B cell (primary cell): ENCODE measurements at regions of chr19 and their contacts with region 1.

Region 1: DNA sequence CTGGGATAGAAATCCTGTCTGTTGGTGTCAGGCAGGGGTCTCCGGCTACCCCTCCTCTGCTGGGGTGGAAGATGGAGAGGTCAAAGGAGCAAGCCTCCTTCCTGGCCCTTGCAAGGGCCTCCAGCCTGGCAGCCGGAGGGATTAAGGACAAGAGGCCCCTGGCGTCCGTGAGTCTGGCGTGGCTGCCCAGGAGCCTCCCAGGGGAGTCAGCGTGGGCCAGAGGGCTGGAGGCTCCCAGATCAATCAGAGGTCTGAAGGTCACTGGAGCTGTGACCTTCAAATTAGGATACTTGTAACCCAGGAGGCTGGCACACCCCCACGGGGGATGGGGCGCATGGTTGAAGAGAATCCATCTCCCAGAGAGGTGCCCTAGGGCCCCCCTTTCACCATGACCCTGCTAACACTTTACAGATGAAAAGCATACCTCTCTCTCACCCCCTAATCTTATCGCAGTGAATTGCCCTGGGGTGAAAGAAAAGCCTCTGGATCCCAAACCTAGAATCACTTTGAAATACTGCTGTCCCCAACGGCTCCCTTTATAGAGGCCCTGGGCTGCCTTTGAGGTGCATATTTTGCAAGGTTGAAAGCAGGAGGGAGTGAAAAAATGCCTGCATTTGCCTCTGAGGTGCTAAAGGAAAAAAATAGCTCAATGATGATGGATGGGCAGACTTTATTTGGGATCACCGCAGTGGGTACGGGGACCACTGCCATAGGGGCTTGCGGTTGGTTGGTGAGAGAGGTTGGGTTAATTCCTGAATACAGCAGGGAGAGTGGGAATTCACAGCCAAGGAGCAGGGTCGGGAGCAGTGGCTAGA is 44.9 kb upstream of the PEG3 start:
- DNase-seq: no peak
- ATAC-seq: no peak
- H3K4me3 ChIP-seq: no peak overlapping the region
- H3K4me3 Mint-ChIP-seq: no peak overlapping the region
- H3K27ac ChIP-seq: no peak overlapping the region
- H3K27ac Mint-ChIP-seq: no peak overlapping the region
- H3K4me1 ChIP-seq: no peaks in the 10 kb centered on the region
- H3K4me1 Mint-ChIP-seq: no peaks in the 10 kb centered on the region
- H3K27me3 ChIP-seq: no peaks in the 10 kb centered on the region
- H3K27me3 Mint-ChIP-seq: no peaks in the 10 kb centered on the region
- CTCF ChIP-seq: no peak

Region 2: DNA sequence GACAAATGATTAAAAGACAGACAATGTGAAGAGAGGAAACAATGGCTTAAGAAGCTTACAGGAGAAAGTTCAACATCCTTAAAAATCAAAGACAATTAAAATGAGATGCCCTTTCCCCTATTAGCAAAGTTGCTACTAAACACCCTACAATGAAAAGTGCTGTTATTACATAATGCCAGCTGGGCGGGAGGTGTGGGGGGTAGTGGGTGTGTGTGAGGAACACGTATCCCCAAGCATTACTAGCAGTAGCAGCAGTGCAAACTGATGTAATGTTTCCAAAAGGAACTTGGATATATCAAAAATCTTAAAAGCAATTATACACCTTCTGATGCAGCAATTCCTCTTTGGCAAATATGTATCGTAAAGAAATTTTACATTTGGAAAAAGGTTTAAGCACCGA is 115.7 kb before region 1 on chr19:
- CTCF ChIA-PET with region 1: no interaction called
- POLR2A ChIA-PET with region 1: no interaction called
- intact Hi-C with region 1: no loop called
- DNase-seq: no peak
- ATAC-seq: no peak
- H3K4me3 ChIP-seq: no peak overlapping the region
- H3K4me3 Mint-ChIP-seq: no peak overlapping the region
- H3K27ac ChIP-seq: no peak overlapping the region
- H3K27ac Mint-ChIP-seq: no peak overlapping the region
- H3K4me1 ChIP-seq: peaks cover 0 to 8% of the 10 kb centered on the region in 2 donors
- H3K4me1 Mint-ChIP-seq: peaks cover 7% of the 10 kb centered on the region
- H3K27me3 ChIP-seq: peaks cover 0 to 7% (median 0%) of the 10 kb centered on the region in 4 experiments
- H3K27me3 Mint-ChIP-seq: peaks cover 6% of the 10 kb centered on the region
- CTCF ChIP-seq: no peak

Region 3: DNA sequence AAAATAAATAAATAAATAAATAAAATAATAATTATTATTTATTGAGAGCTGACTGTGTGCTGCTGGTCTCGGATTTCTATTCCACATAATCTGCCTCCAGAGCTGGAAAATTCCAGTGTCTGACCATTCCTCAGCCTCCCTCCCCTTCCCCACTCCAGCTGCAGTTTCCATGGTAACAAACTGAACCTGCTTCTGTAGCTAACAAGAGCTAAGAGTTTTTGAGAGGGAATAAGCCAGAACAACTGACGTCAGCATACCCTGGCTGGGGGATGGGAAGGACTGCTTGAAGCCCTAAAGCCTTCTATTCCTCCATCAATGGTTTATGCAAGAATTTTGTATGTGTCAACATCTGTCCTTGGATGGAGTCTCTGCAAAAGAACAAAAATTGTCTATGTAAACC is 18.8 kb before region 1 on chr19:
- CTCF ChIA-PET with region 1: no interaction called
- POLR2A ChIA-PET with region 1: no interaction called
- intact Hi-C with region 1: loop called (anchors 1 kb)
- DNase-seq: no peak
- ATAC-seq: no peak
- H3K4me3 ChIP-seq: no peak overlapping the region
- H3K4me3 Mint-ChIP-seq: no peak overlapping the region
- H3K27ac ChIP-seq: no peak overlapping the region
- H3K27ac Mint-ChIP-seq: no peak overlapping the region
- H3K4me1 ChIP-seq: no peaks in the 10 kb centered on the region
- H3K4me1 Mint-ChIP-seq: no peaks in the 10 kb centered on the region
- H3K27me3 ChIP-seq: no peaks in the 10 kb centered on the region
- H3K27me3 Mint-ChIP-seq: no peaks in the 10 kb centered on the region
- CTCF ChIP-seq: no peak

Region 4: DNA sequence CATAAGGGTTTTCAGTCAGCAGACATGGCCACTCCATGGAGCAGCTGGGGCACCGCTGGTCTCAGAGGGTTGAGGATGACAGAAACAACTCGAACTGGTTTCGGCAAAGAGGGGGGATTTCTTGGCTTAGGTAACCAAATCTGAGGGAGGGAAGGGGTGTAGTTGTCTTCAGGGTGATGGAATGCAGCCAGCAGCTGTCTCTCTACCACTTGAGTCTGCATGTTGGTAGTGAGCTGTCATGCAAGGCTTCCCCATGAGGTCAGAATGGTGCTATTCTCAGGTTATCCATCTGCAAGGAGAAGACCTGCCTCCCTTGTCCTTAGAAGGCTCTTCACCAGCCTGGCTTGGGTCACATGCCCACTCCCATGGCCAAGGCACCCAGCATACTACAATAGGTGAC is 10.7 kb after region 1 on chr19:
- CTCF ChIA-PET with region 1: no interaction called
- POLR2A ChIA-PET with region 1: no interaction called
- intact Hi-C with region 1: no loop called
- DNase-seq: no peak
- ATAC-seq: no peak
- H3K4me3 ChIP-seq: no peak overlapping the region
- H3K4me3 Mint-ChIP-seq: no peak overlapping the region
- H3K27ac ChIP-seq: no peak overlapping the region
- H3K27ac Mint-ChIP-seq: no peak overlapping the region
- H3K4me1 ChIP-seq: no peaks in the 10 kb centered on the region
- H3K4me1 Mint-ChIP-seq: no peaks in the 10 kb centered on the region
- H3K27me3 ChIP-seq: no peaks in the 10 kb centered on the region
- H3K27me3 Mint-ChIP-seq: no peaks in the 10 kb centered on the region
- CTCF ChIP-seq: no peak

Region 5: GRCh38 chr19:56995303-56995702 is 109.9 kb after region 1 on chr19:
- CTCF ChIA-PET with region 1: no interaction called
- POLR2A ChIA-PET with region 1: no interaction called
- intact Hi-C with region 1: no loop called
- DNase-seq: no peak
- ATAC-seq: no peak
- H3K4me3 ChIP-seq: no peak overlapping the region
- H3K4me3 Mint-ChIP-seq: no peak overlapping the region
- H3K27ac ChIP-seq: no peak overlapping the region
- H3K27ac Mint-ChIP-seq: no peak overlapping the region
- H3K4me1 ChIP-seq: no peaks in the 10 kb centered on the region
- H3K4me1 Mint-ChIP-seq: no peaks in the 10 kb centered on the region
- H3K27me3 ChIP-seq: no peaks in the 10 kb centered on the region
- H3K27me3 Mint-ChIP-seq: no peaks in the 10 kb centered on the region
- CTCF ChIP-seq: no peak